Psoas muscle (tissue), 8 donors: ENCODE measurements at regions of chr7 and their contacts with region 1.

Region 1: GRCh38 chr7:66748822-66749221 is 8.3 kb downstream of the RABGEF1 start:
- DNase-seq: peak; percentile 35 to 66
- ATAC-seq: peak; percentile 67 to 83 (median 76)
- H3K4me3 ChIP-seq: no peak overlapping the region
- H3K27ac ChIP-seq: peak overlapping the region; percentile 64
- H3K4me1 ChIP-seq: peaks cover 48% of the 10 kb centered on the region
- H3K27me3 ChIP-seq: no peaks in the 10 kb centered on the region
- CTCF ChIP-seq: no peak

Region 2: GRCh38 chr7:66557608-66558143 is 191.1 kb before region 1 on chr7:
- intact Hi-C with region 1: loop called in 1 of 2 experiments (anchors 5 kb)
- DNase-seq: peak; percentile 75 to 87
- ATAC-seq: peak; percentile 78 to 92 (median 90)
- H3K4me3 ChIP-seq: no peak overlapping the region
- H3K27ac ChIP-seq: no peak overlapping the region
- H3K4me1 ChIP-seq: no peaks in the 10 kb centered on the region
- H3K27me3 ChIP-seq: no peaks in the 10 kb centered on the region
- CTCF ChIP-seq: peak; percentile 90